Prostate gland (tissue), 2 donors: ENCODE measurements at regions of chr5 and their contacts with region 1.

Region 1: GRCh38 chr5:178732281-178732680 is 1.8 kb upstream of the ZNF354A start:
- DNase-seq: no peak
- H3K4me3 ChIP-seq: no peak overlapping the region
- H3K27ac ChIP-seq: no peak overlapping the region
- H3K4me1 ChIP-seq: no peaks in the 10 kb centered on the region
- H3K27me3 ChIP-seq: no peaks in the 10 kb centered on the region
- CTCF ChIP-seq: no peak
- POLR2A ChIP-seq: no peak

Region 2: DNA sequence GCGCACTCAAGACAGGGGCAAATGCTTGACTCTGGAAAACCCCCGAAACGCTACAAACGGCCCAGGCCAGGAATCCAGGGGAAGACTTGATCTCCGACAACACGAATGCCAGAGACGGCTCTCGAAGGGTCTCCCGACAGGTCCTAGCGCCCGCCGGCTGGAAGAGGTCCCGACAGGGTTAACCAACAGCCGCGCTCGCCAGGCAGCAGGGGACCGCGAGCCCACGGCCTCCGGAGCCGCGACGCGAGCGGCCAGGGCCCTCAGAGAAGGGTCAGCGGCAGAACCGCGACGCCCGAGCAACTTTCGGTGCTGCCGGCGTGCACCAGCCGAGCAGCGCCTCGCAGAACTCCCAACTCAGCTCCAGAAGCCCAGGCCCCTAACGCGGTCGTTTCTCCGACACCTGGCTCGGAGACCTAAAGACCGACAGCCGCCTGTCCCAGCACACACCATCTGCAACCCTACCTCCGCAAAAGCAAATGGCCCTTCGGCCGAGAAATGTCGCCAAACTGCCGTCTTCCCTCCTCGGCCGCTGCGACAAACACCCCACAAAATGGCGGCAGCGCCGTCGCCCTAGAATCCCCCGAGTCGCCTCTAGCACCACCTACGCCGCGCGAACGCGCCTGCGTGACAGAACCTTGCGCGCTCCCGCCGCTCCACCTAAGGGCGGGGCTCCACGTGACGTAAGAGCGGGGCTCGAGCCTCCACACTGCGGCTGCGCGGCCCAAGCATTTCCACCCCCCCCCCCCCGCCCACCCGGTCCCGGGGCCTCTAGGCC is 105.6 kb before region 1 on chr5 and contains the start of gene CLK4:
- intact Hi-C with region 1: loop called (anchors 10 kb)
- DNase-seq: peak; percentile 96
- H3K4me3 ChIP-seq: peak within 1 kb of the TSS; percentile 86 to 92
- H3K27ac ChIP-seq: peak within 1 kb of the TSS; percentile 96
- H3K4me1 ChIP-seq: peaks cover 8% of the 10 kb centered on the region
- H3K27me3 ChIP-seq: no peaks in the 10 kb centered on the region
- CTCF ChIP-seq: peak in 1 of 4 experiments; percentile 5
- POLR2A ChIP-seq: peak; percentile 92
- total RNA-seq, gene CLK4: 26.7 to 39.0 TPM

Region 3: DNA sequence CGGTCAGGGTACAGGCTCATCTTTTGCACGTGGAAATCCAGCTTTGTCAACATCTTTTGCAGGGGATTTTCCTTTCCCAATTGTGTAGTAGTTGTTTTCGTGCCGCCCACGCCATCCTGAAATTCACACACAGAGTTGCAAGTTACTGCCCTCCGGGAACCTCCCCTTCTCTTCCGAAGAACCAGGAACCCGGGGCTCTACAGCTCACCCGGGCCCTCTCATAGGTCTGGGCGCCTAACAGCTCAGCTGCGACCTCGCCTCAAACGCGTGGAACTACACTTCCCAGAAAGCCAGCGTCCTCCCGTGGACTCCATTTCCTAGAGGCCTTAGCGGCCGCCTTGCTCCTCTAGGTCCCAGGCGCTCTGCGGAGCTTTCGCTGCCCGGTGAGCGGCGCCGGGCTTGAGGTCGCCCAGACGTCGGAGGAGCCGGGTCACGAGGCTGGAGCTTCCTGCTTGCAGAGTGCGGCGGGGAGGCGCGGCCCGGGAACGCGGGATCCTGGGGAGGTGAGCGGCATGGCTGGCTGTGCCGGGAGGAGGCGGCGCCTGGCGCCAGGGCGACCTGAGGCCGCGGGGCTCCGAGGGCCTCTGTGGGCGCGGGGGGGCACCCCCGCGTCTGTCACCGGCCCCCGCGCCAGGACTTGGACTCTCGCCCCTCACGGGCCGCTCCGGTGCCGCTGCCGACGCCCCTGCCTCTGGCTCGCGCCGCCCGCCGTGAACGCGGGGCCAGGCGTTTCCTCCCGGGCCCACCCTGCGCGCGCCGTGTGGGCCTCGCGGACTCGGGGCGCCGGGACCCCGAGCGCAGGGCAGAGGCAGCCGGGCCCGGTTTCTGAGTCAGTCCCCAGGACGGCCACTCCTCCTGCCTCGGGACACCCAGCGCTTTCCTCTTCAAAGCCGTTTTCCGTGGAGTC is 127.6 kb after region 1 on chr5 and contains the start of gene ZNF354B:
- intact Hi-C with region 1: loop called (anchors 5 kb)
- DNase-seq: peak; percentile 89
- H3K4me3 ChIP-seq: peak within 1 kb of the TSS; percentile 76 to 83
- H3K27ac ChIP-seq: peak within 1 kb of the TSS; percentile 76
- H3K4me1 ChIP-seq: no peaks in the 10 kb centered on the region
- H3K27me3 ChIP-seq: no peaks in the 10 kb centered on the region
- CTCF ChIP-seq: peak in 2 of 4 experiments; percentile 27 to 34
- POLR2A ChIP-seq: peak; percentile 60
- total RNA-seq, gene ZNF354B: 12.7 to 22.7 TPM